ENCODE measurements at regions of chr15 and their contacts with region 1.

Region 1: GRCh38 chr15:101641166-101641764 is 10.9 kb downstream of the TM2D3 start:
- DNase-seq: peak; percentile 88
- ATAC-seq: peak; percentile 60
- H3K4me3 Mint-ChIP-seq: no peak overlapping the region
- H3K27ac Mint-ChIP-seq: peak overlapping the region; percentile 70
- H3K4me1 Mint-ChIP-seq: peaks cover 27% of the 10 kb centered on the region
- H3K27me3 Mint-ChIP-seq: no peaks in the 10 kb centered on the region
- CTCF ChIP-seq: peak; percentile 94

Region 2: GRCh38 chr15:101288908-101289513 is 352.3 kb before region 1 on chr15:
- CTCF ChIA-PET with region 1: interaction called, 18 read pairs
- POLR2A ChIA-PET with region 1: interaction called, 3 read pairs
- intact Hi-C with region 1: no loop called
- DNase-seq: no peak
- ATAC-seq: peak; percentile 43
- H3K4me3 Mint-ChIP-seq: no peak overlapping the region
- H3K27ac Mint-ChIP-seq: peak overlapping the region; percentile 44
- H3K4me1 Mint-ChIP-seq: peaks cover 51% of the 10 kb centered on the region
- H3K27me3 Mint-ChIP-seq: no peaks in the 10 kb centered on the region
- CTCF ChIP-seq: peak; percentile 81

Region 3: DNA sequence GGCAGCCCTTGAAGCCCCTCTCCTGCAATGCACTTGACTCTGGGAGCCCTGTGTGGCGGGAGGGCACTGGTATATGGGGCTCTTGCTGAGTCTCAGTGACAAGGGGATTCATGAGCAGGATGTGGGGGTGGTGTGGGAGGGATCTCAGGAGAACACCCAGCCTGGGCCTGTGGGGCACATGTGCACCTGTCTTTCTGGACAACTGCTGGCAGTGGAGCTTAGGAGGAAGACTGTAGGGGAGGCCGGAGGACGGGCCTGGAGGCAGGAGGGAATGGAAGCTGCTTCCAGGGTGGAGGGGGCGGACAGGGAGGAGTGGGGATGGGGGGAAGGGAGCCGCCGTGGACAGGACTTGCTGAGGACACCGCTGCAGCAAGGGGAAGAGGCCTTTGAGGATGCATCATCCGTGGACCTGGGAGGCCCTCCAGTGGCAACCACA is 335.4 kb before region 1 on chr15:
- CTCF ChIA-PET with region 1: interaction called, 44 read pairs
- POLR2A ChIA-PET with region 1: no interaction called
- intact Hi-C with region 1: no loop called
- DNase-seq: no peak
- ATAC-seq: no peak
- H3K4me3 Mint-ChIP-seq: no peak overlapping the region
- H3K27ac Mint-ChIP-seq: no peak overlapping the region
- H3K4me1 Mint-ChIP-seq: no peaks in the 10 kb centered on the region
- H3K27me3 Mint-ChIP-seq: no peaks in the 10 kb centered on the region
- CTCF ChIP-seq: no peak

Region 4: DNA sequence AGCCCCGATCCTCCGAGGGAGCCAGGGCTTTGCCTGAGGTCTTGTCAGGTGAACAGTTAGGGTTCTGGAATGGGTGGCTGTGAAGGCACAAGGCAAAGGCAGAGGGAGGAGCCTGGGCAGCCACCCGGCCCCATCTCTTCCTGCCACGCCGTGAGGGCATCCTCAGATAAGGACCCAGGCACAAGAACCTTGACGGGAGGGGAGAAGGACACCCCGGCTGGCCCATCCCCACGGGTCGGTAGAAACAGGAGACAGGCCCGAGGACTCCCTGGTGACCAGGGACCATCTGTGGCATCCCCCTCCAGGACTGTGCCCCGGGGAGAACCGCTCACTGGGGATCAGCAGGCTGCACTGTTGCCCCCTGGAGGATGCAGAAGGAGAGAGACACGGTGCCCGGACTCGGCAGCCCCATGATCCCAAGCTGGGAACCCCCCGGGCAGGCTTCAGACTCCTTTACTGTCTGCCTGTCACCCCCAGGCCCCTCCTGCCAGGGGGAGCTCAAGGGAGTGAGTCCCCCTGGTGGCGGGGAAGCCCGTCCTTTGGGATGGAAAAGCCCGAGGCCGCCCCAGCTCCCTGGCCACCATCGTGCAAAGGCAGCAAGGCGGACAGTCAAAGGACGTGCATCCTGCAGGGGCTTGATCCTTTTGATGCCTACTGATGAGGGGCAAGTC is 139.4 kb before region 1 on chr15:
- CTCF ChIA-PET with region 1: interaction called, 21 read pairs
- POLR2A ChIA-PET with region 1: no interaction called
- intact Hi-C with region 1: no loop called
- DNase-seq: peak; percentile 79
- ATAC-seq: peak; percentile 93
- H3K4me3 Mint-ChIP-seq: peak overlapping the region; percentile 39
- H3K27ac Mint-ChIP-seq: peak overlapping the region; percentile 11
- H3K4me1 Mint-ChIP-seq: peaks cover 18% of the 10 kb centered on the region
- H3K27me3 Mint-ChIP-seq: peaks cover 19% of the 10 kb centered on the region
- CTCF ChIP-seq: peak; percentile 78

Region 5: GRCh38 chr15:101652098-101652782 is 11.0 kb after region 1 on chr15 and contains the start of gene TM2D3:
- CTCF ChIA-PET with region 1: interaction called, 29 read pairs
- POLR2A ChIA-PET with region 1: interaction called, 6 read pairs
- intact Hi-C with region 1: no loop called
- DNase-seq: peak; percentile 95
- ATAC-seq: peak; percentile 94
- H3K4me3 Mint-ChIP-seq: peak within 1 kb of the TSS; percentile 88
- H3K27ac Mint-ChIP-seq: peak within 1 kb of the TSS; percentile 96
- H3K4me1 Mint-ChIP-seq: peaks cover 37% of the 10 kb centered on the region
- H3K27me3 Mint-ChIP-seq: no peaks in the 10 kb centered on the region
- CTCF ChIP-seq: peak; percentile 71
- total RNA-seq, gene TM2D3: 37.8 to 38.5 TPM

Measured in activated CD8-positive, alpha-beta T cell treated with anti-CD3 and anti-CD28 coated beads for 36 hours (primary cell).